AG04449 (cell line): ENCODE measurements at regions of chr2 and their contacts with region 1.

Region 1: GRCh38 chr2:180980106-180980942 is at the start of gene UBE2E3:
- DNase-seq: no peak
- H3K4me3 ChIP-seq: peak within 1 kb of the TSS; percentile 77
- CTCF ChIP-seq: peak; percentile 87

Region 2: GRCh38 chr2:180707884-180708205 is 272.5 kb before region 1 on chr2:
- CTCF ChIA-PET with region 1: no interaction called
- POLR2A ChIA-PET with region 1: no interaction called
- DNase-seq: peak; percentile 52
- H3K4me3 ChIP-seq: no peak overlapping the region
- CTCF ChIP-seq: no peak

Region 3: DNA sequence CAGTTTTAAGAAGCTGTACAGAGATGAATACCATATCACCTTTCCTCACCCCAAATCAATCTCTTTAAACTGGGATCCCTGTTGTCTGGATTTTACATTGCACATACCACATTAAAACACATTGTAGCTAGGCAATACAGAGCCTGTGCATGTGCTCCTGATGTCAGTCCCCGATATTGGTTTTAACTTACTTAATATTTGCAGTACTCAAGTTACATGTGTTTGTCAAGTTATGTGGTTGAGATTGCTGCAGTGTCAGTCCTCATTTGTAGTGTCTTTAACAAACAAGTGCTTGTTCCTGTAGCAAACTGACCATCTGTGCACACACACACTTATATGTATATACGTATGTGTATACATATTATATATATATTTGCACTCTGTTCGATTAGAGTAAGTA is 10.3 kb before region 1 on chr2:
- CTCF ChIA-PET with region 1: interaction called, 26 read pairs
- POLR2A ChIA-PET with region 1: interaction called, 3 read pairs
- DNase-seq: no peak
- H3K4me3 ChIP-seq: no peak overlapping the region
- CTCF ChIP-seq: no peak

Region 4: DNA sequence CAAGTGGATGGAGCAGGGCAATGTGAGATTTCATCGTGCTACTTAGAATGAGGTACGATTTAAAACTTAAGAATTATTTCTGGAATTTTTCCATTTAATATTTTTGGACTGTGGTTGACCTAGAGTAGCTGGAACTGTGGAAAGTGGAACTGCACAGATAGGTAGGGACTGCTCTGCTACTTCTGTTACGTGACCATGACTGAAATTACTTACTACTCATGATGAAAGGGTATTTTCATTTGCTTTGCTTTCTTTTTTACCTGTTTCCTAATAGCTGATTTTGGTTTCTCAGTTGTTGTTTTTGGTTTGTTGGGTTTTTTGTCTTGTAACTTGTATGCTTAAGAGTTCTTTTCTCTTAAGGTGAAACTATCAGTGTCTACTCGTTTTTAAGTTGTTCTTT is 11.5 kb after region 1 on chr2:
- CTCF ChIA-PET with region 1: interaction called, 14 read pairs
- POLR2A ChIA-PET with region 1: no interaction called
- DNase-seq: no peak
- H3K4me3 ChIP-seq: no peak overlapping the region
- CTCF ChIP-seq: no peak

Region 5: DNA sequence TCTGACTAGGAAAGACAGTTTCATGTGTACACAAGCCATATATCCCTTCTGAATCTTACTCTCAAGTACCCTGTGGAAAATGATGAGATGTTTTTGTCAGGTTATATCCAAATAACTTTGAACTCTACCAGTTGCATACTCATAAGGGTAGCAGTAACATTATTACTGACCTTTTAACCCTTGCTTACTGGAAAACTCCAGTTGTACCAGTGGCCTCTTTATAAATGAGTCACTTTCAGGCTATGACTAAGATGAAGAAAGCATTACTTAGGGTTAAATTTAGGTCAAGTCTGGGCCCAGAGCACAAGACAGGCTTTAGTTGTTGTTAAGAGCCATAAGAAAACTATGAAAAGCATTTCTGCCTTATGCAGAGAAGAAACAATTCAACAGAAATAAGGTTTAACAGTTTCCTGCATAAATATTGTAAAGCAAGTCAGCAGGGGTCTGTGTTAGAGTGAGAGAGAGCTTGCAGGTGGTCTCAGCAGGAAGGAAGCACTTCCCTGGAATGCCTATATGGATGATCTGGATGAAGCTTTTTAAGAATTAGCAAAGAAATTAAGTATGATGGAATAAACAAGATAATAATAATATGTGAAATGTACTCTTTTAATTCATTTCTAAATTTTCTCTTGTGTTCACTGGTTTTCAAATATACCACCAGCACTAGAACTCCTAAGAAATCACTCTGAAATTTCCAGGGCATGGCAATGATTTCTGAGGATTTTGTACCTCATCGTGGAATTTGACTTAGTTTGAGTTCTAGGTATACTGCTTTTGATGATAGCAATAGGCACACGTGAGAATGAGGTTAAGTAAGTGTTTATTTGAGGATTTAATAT is 126.7 kb after region 1 on chr2:
- CTCF ChIA-PET with region 1: no interaction called
- POLR2A ChIA-PET with region 1: no interaction called
- DNase-seq: peak; percentile 85
- H3K4me3 ChIP-seq: no peak overlapping the region
- CTCF ChIP-seq: no peak